Caco-2 (cell line): ENCODE measurements at regions of chr5 and their contacts with region 1.

Region 1: GRCh38 chr5:135332519-135333150 is 66.4 kb downstream of the MACROH2A1 start:
- DNase-seq: peak in 1 of 2 experiments; percentile 71
- H3K4me3 ChIP-seq: no peak overlapping the region
- H3K4me3 Mint-ChIP-seq: no peak overlapping the region
- H3K27ac Mint-ChIP-seq: no peak overlapping the region
- H3K4me1 ChIP-seq: peaks cover 23% of the 10 kb centered on the region
- H3K4me1 Mint-ChIP-seq: peaks cover 22% of the 10 kb centered on the region
- H3K27me3 ChIP-seq: no peaks in the 10 kb centered on the region
- H3K27me3 Mint-ChIP-seq: no peaks in the 10 kb centered on the region
- CTCF ChIP-seq: peak; percentile 60 to 63

Region 2: GRCh38 chr5:135013947-135014570 is 318.6 kb before region 1 on chr5:
- CTCF ChIA-PET with region 1: no interaction called
- POLR2A ChIA-PET with region 1: no interaction called
- intact Hi-C with region 1: loop called (anchors 5 kb)
- DNase-seq: no peak
- H3K4me3 ChIP-seq: no peak overlapping the region
- H3K4me3 Mint-ChIP-seq: no peak overlapping the region
- H3K27ac Mint-ChIP-seq: no peak overlapping the region
- H3K4me1 ChIP-seq: peaks cover 4% of the 10 kb centered on the region; the same call in 1 of the 2 replicates
- H3K4me1 Mint-ChIP-seq: peaks cover 13% of the 10 kb centered on the region
- H3K27me3 ChIP-seq: no peaks in the 10 kb centered on the region
- H3K27me3 Mint-ChIP-seq: no peaks in the 10 kb centered on the region
- CTCF ChIP-seq: no peak

Region 3: GRCh38 chr5:135191084-135191826 is 141.4 kb before region 1 on chr5:
- CTCF ChIA-PET with region 1: no interaction called
- POLR2A ChIA-PET with region 1: no interaction called
- intact Hi-C with region 1: loop called (anchors 1 kb)
- DNase-seq: peak; percentile 90 to 93
- H3K4me3 ChIP-seq: peak overlapping the region; percentile 72
- H3K4me3 Mint-ChIP-seq: peak overlapping the region; percentile 81
- H3K27ac Mint-ChIP-seq: peak overlapping the region; percentile 76
- H3K4me1 ChIP-seq: peaks cover 35% of the 10 kb centered on the region
- H3K4me1 Mint-ChIP-seq: peaks cover 16% of the 10 kb centered on the region
- H3K27me3 ChIP-seq: no peaks in the 10 kb centered on the region
- H3K27me3 Mint-ChIP-seq: no peaks in the 10 kb centered on the region
- CTCF ChIP-seq: peak; percentile 94 to 98

Region 4: DNA sequence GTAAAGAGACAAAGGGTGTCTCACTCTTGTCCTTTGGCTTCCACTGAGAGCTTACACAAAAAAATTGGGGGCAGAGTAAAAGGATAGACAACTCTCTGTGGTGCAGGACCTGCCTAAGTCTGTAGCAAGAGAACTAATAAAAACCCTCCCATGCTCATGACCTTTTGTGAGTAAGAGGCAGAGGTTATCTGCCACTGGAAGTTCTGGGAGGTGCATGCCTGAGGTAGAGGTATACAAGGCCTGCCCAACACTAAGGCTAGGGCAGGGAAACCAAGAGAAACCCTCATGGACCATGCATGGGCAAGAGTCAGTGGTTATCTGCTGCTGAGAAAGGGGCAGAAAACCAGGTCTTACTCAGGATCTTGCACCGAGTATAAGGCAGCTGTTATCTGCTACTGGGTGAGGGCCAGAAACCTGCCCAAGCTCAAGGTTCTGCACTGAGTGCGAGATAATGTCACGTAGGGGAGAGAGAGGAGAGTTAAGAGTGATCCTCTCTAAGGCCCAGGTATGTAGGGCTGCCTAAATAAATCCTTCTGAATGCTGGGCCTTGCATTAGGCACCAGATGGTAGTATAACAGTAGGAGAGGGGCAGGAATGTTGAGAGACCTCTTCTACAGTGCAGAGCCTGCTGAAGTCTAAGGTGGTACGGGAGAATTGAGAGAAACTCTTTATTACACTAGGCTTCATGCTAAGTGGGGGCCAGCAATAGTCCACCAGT is 77.0 kb before region 1 on chr5:
- CTCF ChIA-PET with region 1: no interaction called
- POLR2A ChIA-PET with region 1: no interaction called
- intact Hi-C with region 1: loop called (anchors 1 kb)
- DNase-seq: no peak
- H3K4me3 ChIP-seq: no peak overlapping the region
- H3K4me3 Mint-ChIP-seq: no peak overlapping the region
- H3K27ac Mint-ChIP-seq: peak overlapping the region; percentile 68
- H3K4me1 ChIP-seq: peaks cover 21% of the 10 kb centered on the region
- H3K4me1 Mint-ChIP-seq: peaks cover 16% of the 10 kb centered on the region
- H3K27me3 ChIP-seq: no peaks in the 10 kb centered on the region
- H3K27me3 Mint-ChIP-seq: no peaks in the 10 kb centered on the region
- CTCF ChIP-seq: no peak

Region 5: GRCh38 chr5:135319928-135320607 is 12.6 kb before region 1 on chr5:
- CTCF ChIA-PET with region 1: no interaction called
- POLR2A ChIA-PET with region 1: no interaction called
- intact Hi-C with region 1: loop called (anchors 1 kb)
- DNase-seq: peak; percentile 44 to 51
- H3K4me3 ChIP-seq: no peak overlapping the region
- H3K4me3 Mint-ChIP-seq: no peak overlapping the region
- H3K27ac Mint-ChIP-seq: no peak overlapping the region
- H3K4me1 ChIP-seq: peaks cover 16% of the 10 kb centered on the region
- H3K4me1 Mint-ChIP-seq: peaks cover 18% of the 10 kb centered on the region
- H3K27me3 ChIP-seq: no peaks in the 10 kb centered on the region
- H3K27me3 Mint-ChIP-seq: no peaks in the 10 kb centered on the region
- CTCF ChIP-seq: peak; percentile 8 to 54